ENCODE measurements at regions of chr12 and their contacts with region 1.

Region 1: GRCh38 chr12:79615596-79616560 is 74.9 kb downstream of the PAWR start:
- DNase-seq: no peak
- H3K4me3 ChIP-seq: no peak overlapping the region
- H3K27ac ChIP-seq: no peak overlapping the region
- H3K4me1 ChIP-seq: no peaks in the 10 kb centered on the region
- H3K27me3 ChIP-seq: no peaks in the 10 kb centered on the region
- CTCF ChIP-seq: no peak

Region 2: GRCh38 chr12:79597910-79598309 is 18.0 kb before region 1 on chr12:
- CTCF ChIA-PET with region 1: no interaction called
- POLR2A ChIA-PET with region 1: no interaction called
- intact Hi-C with region 1: no loop called
- DNase-seq: no peak
- H3K4me3 ChIP-seq: no peak overlapping the region
- H3K27ac ChIP-seq: peak overlapping the region; percentile 22; the same call in 1 of the 2 replicates
- H3K4me1 ChIP-seq: no peaks in the 10 kb centered on the region
- H3K27me3 ChIP-seq: no peaks in the 10 kb centered on the region
- CTCF ChIP-seq: no peak

Region 3: GRCh38 chr12:79674629-79675028 is 58.8 kb after region 1 on chr12:
- CTCF ChIA-PET with region 1: no interaction called
- POLR2A ChIA-PET with region 1: interaction called, 11 read pairs
- intact Hi-C with region 1: no loop called
- DNase-seq: peak in 1 of 2 experiments; percentile 61
- H3K4me3 ChIP-seq: no peak overlapping the region
- H3K27ac ChIP-seq: no peak overlapping the region
- H3K4me1 ChIP-seq: peaks cover 8% of the 10 kb centered on the region; the same call in 1 of the 2 replicates
- H3K27me3 ChIP-seq: no peaks in the 10 kb centered on the region
- CTCF ChIP-seq: no peak

Region 4: DNA sequence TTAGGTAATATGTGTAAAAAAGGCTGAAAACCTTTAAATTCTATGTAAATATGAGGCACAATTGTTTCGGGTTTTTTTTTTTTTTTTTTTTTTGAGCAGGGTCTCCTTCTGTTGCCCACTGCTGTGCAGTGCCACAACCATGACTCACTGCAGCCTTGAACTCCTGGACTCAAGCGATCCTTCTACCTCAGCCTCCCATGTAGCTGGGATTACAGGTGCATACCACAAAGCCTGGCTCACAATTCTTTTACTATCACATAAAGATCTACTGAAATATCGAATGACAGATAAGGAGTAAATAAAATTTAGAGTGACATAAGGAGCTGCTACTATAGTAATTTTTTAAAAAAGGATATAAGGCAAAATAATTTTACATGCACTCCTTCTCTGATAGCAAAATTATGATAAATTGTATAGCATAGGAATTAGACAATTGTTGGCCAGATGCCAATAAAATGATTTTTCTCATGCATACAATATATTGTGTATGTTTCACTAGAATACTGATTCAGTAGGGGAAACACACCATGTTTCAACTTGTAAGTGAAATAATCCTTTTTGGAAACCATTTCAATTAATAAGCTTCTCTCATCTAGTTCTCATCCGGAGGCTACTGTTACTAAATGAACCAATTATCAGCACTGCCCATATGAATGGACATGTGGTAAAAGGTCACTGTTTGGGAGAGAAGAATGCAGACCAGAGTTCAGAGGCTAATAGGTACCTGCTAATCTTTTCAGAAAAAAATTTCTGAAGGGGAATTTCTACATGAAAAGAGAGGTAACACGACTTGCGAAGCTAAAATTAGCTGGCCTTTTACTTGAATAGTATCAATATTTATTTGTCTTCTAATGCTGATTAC is 210.6 kb after region 1 on chr12:
- CTCF ChIA-PET with region 1: no interaction called
- POLR2A ChIA-PET with region 1: no interaction called
- intact Hi-C with region 1: no loop called
- DNase-seq: no peak
- H3K4me3 ChIP-seq: no peak overlapping the region
- H3K27ac ChIP-seq: no peak overlapping the region
- H3K4me1 ChIP-seq: no peaks in the 10 kb centered on the region
- H3K27me3 ChIP-seq: no peaks in the 10 kb centered on the region
- CTCF ChIP-seq: no peak